ENCODE measurements at regions of chr16 and their contacts with region 1.

Region 1: DNA sequence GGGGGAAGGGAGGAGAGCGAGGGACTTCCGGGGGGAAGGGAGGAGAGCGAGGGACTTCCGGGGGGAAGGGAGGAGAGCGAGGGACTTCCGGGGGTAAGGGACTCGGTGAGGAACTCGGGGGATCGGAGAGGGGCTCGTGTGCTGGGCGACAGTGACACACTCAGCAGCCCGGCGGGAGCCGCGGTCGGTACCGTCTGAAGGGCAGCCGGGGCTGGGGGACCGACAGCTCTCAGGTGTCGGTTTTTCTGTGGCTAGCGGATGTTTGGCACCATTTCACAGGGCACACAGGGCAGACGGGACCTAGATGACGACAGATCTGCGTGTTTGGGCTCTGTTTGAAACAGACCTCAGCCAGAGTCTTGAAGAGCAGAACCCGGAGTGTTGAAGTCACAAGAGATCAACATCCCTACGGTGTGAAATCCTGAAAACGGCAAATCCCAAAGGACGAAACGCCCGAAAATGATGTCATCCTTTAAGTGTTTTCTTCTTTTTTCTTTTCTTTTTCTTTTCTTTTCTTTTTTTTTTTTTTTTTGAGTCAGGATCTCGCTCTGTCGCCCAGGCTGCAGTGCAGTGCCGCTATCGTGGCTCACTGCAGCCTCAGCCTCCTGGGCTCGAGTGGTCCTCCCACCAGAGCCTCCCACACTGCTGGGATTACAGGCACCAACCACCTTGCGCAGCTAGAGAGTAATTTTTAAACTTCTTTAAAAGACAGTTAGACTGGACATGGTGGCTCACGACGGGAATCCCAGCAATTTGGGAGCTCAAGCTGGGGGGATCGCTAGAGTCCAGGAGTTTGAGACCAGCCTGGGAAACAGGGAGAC is 23.9 kb downstream of the ZNF778 start:
- DNase-seq: peak; percentile 86
- H3K4me3 Mint-ChIP-seq: peak overlapping the region; percentile 97
- H3K27ac Mint-ChIP-seq: peak overlapping the region; percentile 96
- H3K4me1 Mint-ChIP-seq: peaks cover 4% of the 10 kb centered on the region
- H3K27me3 Mint-ChIP-seq: no peaks in the 10 kb centered on the region

Region 2: DNA sequence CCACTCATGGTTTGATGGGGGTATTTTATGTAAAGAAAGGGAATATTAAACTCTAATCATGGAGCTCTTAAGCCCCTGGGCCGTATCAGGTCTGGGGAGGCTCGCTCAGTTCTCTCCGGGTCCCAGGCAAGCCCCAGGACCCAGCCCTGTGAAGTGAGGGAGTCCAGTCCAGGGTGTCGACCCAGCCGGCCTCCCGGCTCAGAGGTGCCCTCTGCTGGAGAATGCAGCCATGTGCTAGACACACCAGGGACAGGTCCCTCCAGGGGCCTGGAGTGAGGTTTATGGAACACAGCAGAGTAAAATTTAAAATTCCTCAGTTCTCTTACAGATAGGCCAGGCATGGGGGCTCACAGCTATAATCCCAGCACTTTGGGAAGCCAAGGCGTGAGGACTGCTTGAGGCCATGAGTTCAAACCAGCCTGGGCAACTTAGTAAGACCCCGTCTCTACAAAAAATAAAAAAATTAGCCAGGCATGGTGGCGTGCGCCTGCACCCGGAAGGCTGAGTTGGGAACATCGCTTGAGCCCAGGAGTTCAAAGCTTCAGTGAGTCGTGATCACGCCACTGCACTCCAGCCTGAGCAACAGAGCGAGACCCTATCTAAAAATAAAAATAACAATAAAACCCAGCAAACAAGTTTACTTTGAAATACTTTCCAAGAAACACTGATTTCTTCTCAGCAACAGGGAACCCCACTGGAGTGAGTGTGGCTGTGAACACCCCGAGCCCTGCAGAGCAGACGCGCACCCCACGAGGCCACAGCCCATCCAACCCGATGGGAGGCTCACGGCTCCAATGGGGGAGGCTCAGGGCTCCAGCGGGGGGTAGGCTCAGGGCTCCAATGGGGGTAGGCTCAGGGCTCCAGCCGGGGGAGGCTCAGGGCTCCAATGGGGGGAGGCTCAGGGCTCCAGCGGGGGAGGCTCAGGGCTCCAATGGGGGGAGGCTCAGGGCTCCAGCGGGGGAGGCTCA is 48.3 kb after region 1 on chr16:
- CTCF ChIA-PET with region 1: interaction called, 12 read pairs
- POLR2A ChIA-PET with region 1: no interaction called
- intact Hi-C with region 1: no loop called
- DNase-seq: peak; percentile 78
- H3K4me3 Mint-ChIP-seq: no peak overlapping the region
- H3K27ac Mint-ChIP-seq: peak overlapping the region; percentile 8
- H3K4me1 Mint-ChIP-seq: peaks cover 11% of the 10 kb centered on the region
- H3K27me3 Mint-ChIP-seq: no peaks in the 10 kb centered on the region

Measured in activated CD4-positive, alpha-beta memory T cell treated with anti-CD3 and anti-CD28 coated beads for 36 hours (primary cell).